HepG2 (cell line): ENCODE measurements at regions of chr4 and their contacts with region 1.

Region 1: GRCh38 chr4:189202182-189202868 is 738.3 kb upstream of the FRG1 start:
- DNase-seq: peak; percentile 9
- ATAC-seq: peak; percentile 87
- H3K4me3 ChIP-seq: no peak overlapping the region
- H3K27ac ChIP-seq: no peak overlapping the region
- H3K4me1 ChIP-seq: no peaks in the 10 kb centered on the region
- H3K27me3 ChIP-seq: 0 out of 5 replicates have a peak, but pooled peaks cover 0 to 4% of the 10 kb centered on the region in 2 experiments
- CTCF ChIP-seq: peak; percentile 88
- EP300 ChIP-seq: no peak
- POLR2A ChIP-seq: no peak
- RAD21 ChIP-seq: peak; percentile 50; the same call in 1 of the 2 replicates

Region 2: DNA sequence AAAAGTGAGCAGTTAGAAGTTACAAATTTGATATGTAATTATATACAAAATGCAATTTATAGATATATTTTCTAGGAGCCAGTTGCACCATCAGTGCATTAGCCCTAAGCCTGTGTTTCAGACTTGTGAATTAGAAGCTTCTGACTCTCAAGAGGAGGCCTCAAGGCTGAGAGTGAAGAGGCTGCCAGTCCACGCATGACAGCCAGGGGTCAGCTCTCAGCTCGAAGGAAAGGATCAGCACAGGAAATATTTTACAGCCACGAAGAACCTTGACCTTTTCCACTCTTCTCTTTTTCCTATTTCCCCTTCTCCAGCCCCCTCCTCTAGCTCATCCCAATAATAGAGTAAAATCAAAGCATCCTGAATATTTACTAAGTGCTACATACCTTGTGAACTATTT is 420.7 kb before region 1 on chr4:
- CTCF ChIA-PET with region 1: interaction called, 3 read pairs
- POLR2A ChIA-PET with region 1: no interaction called
- in situ Hi-C with region 1: no loop called
- intact Hi-C with region 1: loop called (anchors 5 kb)
- DNase-seq: peak; percentile 1
- ATAC-seq: peak; percentile 71
- H3K4me3 ChIP-seq: no peak overlapping the region
- H3K27ac ChIP-seq: no peak overlapping the region
- H3K4me1 ChIP-seq: no peaks in the 10 kb centered on the region
- H3K27me3 ChIP-seq: no peaks in the 10 kb centered on the region
- CTCF ChIP-seq: no peak
- EP300 ChIP-seq: no peak
- POLR2A ChIP-seq: no peak
- RAD21 ChIP-seq: no peak

Region 3: DNA sequence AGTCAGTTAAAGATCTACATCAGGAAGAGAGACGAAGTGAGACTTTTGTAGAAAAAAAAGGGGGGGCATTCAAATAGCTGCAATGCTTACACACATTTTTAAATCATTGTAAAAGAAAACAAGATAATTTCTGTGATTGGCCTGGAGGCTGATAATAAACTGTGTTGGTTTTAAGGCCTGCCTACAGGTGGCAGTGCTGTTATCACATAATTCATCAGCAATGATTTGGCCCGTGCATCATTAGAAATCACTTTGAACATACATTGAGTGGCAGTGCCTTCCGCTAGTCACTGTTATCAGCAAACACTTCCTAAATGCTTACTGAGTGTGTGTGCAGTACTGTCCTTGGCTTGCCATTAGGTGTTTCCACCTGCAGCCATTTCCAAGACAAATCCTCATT is 231.2 kb before region 1 on chr4:
- CTCF ChIA-PET with region 1: no interaction called
- POLR2A ChIA-PET with region 1: no interaction called
- in situ Hi-C with region 1: no loop called
- intact Hi-C with region 1: loop called (anchors 5 kb)
- DNase-seq: no peak
- ATAC-seq: no peak
- H3K4me3 ChIP-seq: no peak overlapping the region
- H3K27ac ChIP-seq: no peak overlapping the region
- H3K4me1 ChIP-seq: no peaks in the 10 kb centered on the region
- H3K27me3 ChIP-seq: no peaks in the 10 kb centered on the region
- CTCF ChIP-seq: no peak
- EP300 ChIP-seq: no peak
- POLR2A ChIP-seq: no peak
- RAD21 ChIP-seq: no peak